SK-N-SH (cell line): ENCODE measurements at regions of chr12 and their contacts with region 1.

Region 1: GRCh38 chr12:75560167-75560566 is 48.8 kb upstream of the KRR1 start:
- DNase-seq: peak; percentile 7
- H3K4me3 ChIP-seq: no peak overlapping the region
- H3K27ac ChIP-seq: no peak overlapping the region
- H3K4me1 ChIP-seq: peaks cover 0 to 2% of the 10 kb centered on the region in 2 experiments; a peak in 1 of 4 replicates
- H3K27me3 ChIP-seq: no peaks in the 10 kb centered on the region
- CTCF ChIP-seq: peak; percentile 60
- EP300 ChIP-seq: no peak
- RAD21 ChIP-seq: peak; percentile 88

Region 2: GRCh38 chr12:76037130-76038103 is 477.2 kb after region 1 on chr12:
- CTCF ChIA-PET with region 1: interaction called, 19 read pairs
- POLR2A ChIA-PET with region 1: no interaction called
- DNase-seq: peak; percentile 59
- H3K4me3 ChIP-seq: no peak overlapping the region
- H3K27ac ChIP-seq: peak overlapping the region in 1 of 2 experiments; percentile 14; a peak in 2 of 4 replicates
- H3K4me1 ChIP-seq: peaks cover 0 to 22% of the 10 kb centered on the region in 2 experiments; a peak in 3 of 4 replicates
- H3K27me3 ChIP-seq: no peaks in the 10 kb centered on the region
- CTCF ChIP-seq: peak; percentile 92
- EP300 ChIP-seq: no peak
- RAD21 ChIP-seq: peak; percentile 95